ENCODE measurements at regions of chr16 and their contacts with region 1.

Region 1: DNA sequence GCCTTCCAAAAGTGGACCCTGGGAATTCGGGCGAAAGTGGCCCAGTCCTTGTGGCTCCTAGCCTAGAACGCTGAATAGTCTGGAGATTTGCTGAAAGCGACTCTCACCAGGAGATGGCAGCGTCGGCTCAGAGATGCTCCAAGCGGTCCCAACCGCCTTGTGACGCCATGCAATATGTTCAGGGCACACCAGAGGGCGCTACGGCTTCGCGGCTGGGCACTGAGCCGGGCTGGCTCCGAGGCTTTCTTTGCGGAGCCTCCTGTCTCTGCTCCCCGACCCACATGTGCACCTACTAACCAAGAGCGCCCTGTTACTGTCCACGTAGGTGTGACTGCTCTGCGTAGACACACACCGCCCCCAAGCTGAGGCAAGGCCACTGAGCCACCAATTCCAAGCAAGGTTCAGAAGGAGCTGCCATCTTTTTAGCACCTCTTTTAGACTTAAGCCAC is 36.9 kb downstream of the SYCE1L start:
- DNase-seq: peak; percentile 92
- H3K4me3 Mint-ChIP-seq: peak overlapping the region; percentile 17
- H3K27ac Mint-ChIP-seq: no peak overlapping the region
- H3K4me1 Mint-ChIP-seq: peaks cover 4% of the 10 kb centered on the region
- H3K27me3 Mint-ChIP-seq: peaks cover 16% of the 10 kb centered on the region

Region 2: GRCh38 chr16:77211880-77212740 is 24.0 kb before region 1 on chr16:
- CTCF ChIA-PET with region 1: no interaction called
- POLR2A ChIA-PET with region 1: no interaction called
- intact Hi-C with region 1: no loop called
- DNase-seq: peak; percentile 84
- H3K4me3 Mint-ChIP-seq: peak overlapping the region; percentile 74
- H3K27ac Mint-ChIP-seq: peak overlapping the region; percentile 34
- H3K4me1 Mint-ChIP-seq: peaks cover 12% of the 10 kb centered on the region
- H3K27me3 Mint-ChIP-seq: no peaks in the 10 kb centered on the region

Region 3: GRCh38 chr16:77308163-77308561 is 72.1 kb after region 1 on chr16:
- CTCF ChIA-PET with region 1: interaction called, 4 read pairs
- POLR2A ChIA-PET with region 1: no interaction called
- intact Hi-C with region 1: loop called (anchors 5 kb)
- DNase-seq: no peak
- H3K4me3 Mint-ChIP-seq: no peak overlapping the region
- H3K27ac Mint-ChIP-seq: peak overlapping the region; percentile 72
- H3K4me1 Mint-ChIP-seq: peaks cover 18% of the 10 kb centered on the region
- H3K27me3 Mint-ChIP-seq: peaks cover 14% of the 10 kb centered on the region

Region 4: DNA sequence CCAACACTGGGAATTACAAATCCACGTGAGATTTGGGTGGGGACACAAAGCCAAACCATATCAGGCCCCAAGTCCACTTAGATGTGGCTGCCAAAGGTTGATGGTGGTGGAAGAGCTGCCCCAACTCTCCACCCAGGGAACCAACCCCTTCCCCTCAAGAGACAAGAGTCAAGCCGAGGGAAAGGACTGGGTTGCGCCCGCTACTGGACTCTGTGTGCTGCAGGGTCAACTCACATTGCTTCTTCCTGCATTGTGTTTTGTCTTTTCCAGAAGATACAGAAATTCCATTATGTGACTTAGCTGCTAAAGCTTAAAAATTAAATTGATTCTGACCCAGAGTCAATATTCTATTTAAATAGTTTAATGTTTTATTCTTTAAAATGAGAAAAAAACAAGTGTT is 140.3 kb after region 1 on chr16:
- CTCF ChIA-PET with region 1: interaction called, 22 read pairs
- POLR2A ChIA-PET with region 1: no interaction called
- intact Hi-C with region 1: loop called (anchors 1 kb)
- DNase-seq: no peak
- H3K4me3 Mint-ChIP-seq: no peak overlapping the region
- H3K27ac Mint-ChIP-seq: no peak overlapping the region
- H3K4me1 Mint-ChIP-seq: no peaks in the 10 kb centered on the region
- H3K27me3 Mint-ChIP-seq: no peaks in the 10 kb centered on the region

Region 5: DNA sequence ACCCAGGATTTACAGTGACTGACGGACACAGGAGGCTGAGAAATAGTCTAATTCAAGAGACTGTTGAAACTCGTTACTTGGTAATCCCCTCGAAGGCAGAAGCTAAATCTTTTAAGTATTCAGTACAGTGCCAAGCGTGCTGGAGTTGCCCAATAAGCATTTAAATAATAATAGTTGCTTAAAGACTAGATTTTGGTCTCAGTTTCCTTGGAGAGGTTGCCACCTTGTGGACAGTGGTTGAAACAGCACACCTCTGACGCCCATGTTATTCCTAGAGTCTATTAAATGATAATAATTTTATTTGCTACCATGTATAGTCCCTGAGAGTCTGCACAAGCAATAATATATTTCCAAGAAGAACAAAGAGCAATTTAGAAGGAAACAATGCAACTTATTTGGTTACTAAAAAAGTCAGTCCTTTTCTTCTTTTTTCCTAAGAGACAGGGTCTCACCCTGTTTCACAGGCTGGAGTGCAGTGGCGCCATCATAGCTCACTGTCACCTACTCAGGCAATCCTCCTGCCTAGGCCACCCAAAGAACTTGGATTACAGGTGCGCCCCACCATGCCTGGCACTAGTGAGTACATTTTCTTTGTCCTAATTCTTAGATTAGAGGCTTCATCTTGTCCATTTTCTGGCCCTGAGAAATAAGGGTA is 348.2 kb after region 1 on chr16:
- CTCF ChIA-PET with region 1: interaction called, 206 read pairs
- POLR2A ChIA-PET with region 1: no interaction called
- intact Hi-C with region 1: loop called (anchors 1 kb)
- DNase-seq: peak; percentile 50
- H3K4me3 Mint-ChIP-seq: no peak overlapping the region
- H3K27ac Mint-ChIP-seq: no peak overlapping the region
- H3K4me1 Mint-ChIP-seq: peaks cover 10% of the 10 kb centered on the region
- H3K27me3 Mint-ChIP-seq: peaks cover 21% of the 10 kb centered on the region

Region 6: DNA sequence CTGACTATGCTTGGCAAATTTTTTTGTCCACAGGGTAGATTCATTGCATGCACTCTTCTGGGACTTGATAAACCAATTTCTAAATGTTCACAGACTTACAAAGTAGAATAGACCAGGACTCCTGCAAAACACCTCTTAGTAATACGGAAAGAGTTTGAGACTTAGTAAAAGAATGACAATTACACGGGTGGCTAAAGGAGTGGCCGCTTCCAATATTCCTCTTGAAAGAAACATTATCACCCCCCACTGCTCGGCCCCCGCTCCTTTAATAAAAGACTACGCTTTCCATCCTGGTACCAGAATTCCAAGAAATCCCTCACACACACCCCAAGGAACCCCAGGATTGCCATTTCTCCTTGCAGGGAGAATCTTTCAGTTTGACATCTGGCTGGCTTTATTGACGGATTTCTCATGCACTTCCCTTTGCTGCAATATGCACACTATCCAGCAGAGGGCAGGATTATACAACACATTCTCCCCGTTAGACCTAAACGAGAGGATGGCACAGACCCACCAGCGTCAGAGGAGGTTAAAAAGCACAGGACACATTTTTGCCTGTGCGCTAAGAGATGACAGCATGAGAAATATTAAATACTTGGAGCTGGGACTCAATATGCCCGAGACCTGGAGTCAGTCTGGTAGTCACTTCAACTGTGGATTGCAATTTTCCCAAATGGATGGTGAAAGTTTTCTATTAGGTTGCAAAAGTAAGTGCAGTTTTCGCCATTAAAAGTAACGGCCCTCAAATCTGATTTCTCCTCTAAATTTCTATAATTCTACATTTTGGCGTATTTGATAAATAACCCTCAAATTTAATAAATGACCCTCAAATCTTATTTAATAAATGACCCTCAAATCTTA is 439.6 kb after region 1 on chr16:
- CTCF ChIA-PET with region 1: no interaction called
- POLR2A ChIA-PET with region 1: no interaction called
- intact Hi-C with region 1: loop called (anchors 5 kb)
- DNase-seq: peak; percentile 70
- H3K4me3 Mint-ChIP-seq: no peak overlapping the region
- H3K27ac Mint-ChIP-seq: no peak overlapping the region
- H3K4me1 Mint-ChIP-seq: no peaks in the 10 kb centered on the region
- H3K27me3 Mint-ChIP-seq: peaks cover 8% of the 10 kb centered on the region

Region 7: DNA sequence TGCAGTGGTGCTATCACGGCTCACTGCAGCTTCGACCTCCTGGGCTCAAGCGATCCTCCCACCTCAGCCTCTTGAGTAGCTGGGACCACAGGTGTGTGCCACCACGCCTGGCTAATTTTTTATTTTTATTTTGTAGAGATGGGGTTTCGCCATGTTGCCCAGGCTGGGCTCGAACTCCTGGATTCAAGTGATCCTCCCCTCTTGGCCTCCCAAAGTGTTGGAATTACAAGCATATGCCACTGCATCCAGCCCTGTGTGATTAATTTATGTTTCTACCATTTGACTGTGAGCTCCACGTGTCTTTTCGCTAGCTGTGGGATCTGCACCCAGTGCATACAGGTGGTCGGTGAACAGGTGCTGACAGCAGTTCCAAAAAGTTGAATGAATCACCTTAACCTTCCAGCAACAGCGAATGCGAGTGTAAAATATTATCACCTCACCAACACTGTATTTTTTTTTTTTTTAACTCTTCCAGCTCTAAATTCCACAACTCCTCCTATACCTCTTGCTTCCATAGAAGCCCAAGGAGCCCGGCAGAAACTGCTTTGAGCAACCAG is 485.7 kb after region 1 on chr16:
- CTCF ChIA-PET with region 1: no interaction called
- POLR2A ChIA-PET with region 1: no interaction called
- intact Hi-C with region 1: no loop called
- DNase-seq: no peak
- H3K4me3 Mint-ChIP-seq: peak overlapping the region; percentile 81
- H3K27ac Mint-ChIP-seq: peak overlapping the region; percentile 79
- H3K4me1 Mint-ChIP-seq: peaks cover 12% of the 10 kb centered on the region
- H3K27me3 Mint-ChIP-seq: no peaks in the 10 kb centered on the region

Region 8: GRCh38 chr16:77971306-77972271 is 735.5 kb after region 1 on chr16:
- CTCF ChIA-PET with region 1: interaction called, 4 read pairs
- POLR2A ChIA-PET with region 1: no interaction called
- intact Hi-C with region 1: loop called (anchors 1 kb)
- DNase-seq: peak; percentile 82
- H3K4me3 Mint-ChIP-seq: no peak overlapping the region
- H3K27ac Mint-ChIP-seq: no peak overlapping the region
- H3K4me1 Mint-ChIP-seq: no peaks in the 10 kb centered on the region
- H3K27me3 Mint-ChIP-seq: peaks cover 9% of the 10 kb centered on the region

Region 9: DNA sequence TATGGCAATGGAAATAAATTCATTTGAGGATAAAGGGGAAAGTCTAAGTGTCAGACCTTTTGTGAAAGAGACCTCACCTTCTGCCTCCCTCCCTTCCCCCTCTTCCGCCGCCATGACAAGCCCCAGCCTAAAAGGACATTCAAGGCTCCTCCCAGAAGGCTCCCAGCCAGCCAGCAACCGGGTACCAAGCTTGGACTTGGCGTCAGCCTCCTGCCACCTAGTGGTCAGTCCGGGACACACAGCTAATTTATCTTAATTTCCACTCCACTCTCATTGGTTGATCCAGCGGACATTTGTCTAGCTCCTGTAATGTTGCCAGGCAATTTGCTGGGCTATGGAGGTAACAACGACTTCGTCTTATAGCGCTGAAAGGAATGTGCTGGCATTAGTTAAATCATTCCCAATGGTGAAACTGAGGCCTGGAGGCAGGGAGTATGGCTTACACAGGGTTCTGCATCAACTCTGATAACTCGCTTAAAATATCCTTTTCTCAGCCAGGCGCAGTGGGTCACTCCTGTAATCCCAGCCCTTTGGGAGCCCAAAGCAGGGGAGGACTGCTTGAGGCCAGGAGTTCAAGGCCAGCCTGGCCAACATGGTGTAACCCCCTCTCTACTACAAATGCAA is 766.9 kb after region 1 on chr16:
- CTCF ChIA-PET with region 1: interaction called, 4 read pairs
- POLR2A ChIA-PET with region 1: no interaction called
- intact Hi-C with region 1: loop called (anchors 1 kb)
- DNase-seq: peak; percentile 87
- H3K4me3 Mint-ChIP-seq: no peak overlapping the region
- H3K27ac Mint-ChIP-seq: no peak overlapping the region
- H3K4me1 Mint-ChIP-seq: peaks cover 2% of the 10 kb centered on the region
- H3K27me3 Mint-ChIP-seq: peaks cover 11% of the 10 kb centered on the region

Measured in activated CD4-positive, alpha-beta memory T cell treated with anti-CD3 and anti-CD28 coated beads for 36 hours (primary cell).